OCI-LY7 (cell line): ENCODE measurements at regions of chr1 and their contacts with region 1.

Region 1: GRCh38 chr1:96741335-96741734 is 19.8 kb downstream of the PTBP2 start:
- DNase-seq: no peak
- H3K4me3 ChIP-seq: no peak overlapping the region
- H3K27ac ChIP-seq: no peak overlapping the region
- H3K4me1 ChIP-seq: no peaks in the 10 kb centered on the region
- CTCF ChIP-seq: no peak

Region 2: DNA sequence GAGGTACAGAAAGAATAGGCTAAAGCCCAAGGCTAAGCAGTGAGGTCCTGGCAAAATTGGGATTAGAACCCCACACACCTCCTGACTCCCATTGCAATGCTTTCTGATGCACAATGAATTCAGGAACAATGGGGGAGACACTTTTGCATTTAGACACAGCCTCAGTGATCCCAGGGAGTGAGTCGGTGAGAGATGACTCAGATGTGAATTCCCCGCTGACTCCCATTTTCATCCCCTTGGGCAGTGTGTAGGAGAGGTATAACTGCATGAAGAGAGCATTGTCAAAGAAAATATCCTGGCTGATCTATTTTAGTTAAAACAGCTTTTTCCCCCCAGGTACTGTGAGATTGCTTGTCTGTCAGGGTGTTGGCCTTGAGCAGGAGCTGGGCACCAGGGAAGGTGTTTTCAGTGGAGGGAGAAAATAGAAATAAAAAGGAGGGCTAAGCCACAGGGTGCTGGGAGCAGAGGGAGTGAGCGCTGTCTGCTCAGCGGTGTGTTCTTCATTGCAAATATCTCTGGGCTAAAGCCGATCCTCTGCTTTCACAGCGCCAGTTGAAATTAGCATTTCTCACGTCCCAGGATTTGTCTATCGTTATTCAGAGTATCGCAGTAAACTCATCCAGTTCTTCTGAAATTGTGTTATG is 267.4 kb before region 1 on chr1:
- CTCF ChIA-PET with region 1: no interaction called
- POLR2A ChIA-PET with region 1: no interaction called
- intact Hi-C with region 1: no loop called
- DNase-seq: no peak
- H3K4me3 ChIP-seq: no peak overlapping the region
- H3K27ac ChIP-seq: no peak overlapping the region
- H3K4me1 ChIP-seq: no peaks in the 10 kb centered on the region
- CTCF ChIP-seq: no peak

Region 3: DNA sequence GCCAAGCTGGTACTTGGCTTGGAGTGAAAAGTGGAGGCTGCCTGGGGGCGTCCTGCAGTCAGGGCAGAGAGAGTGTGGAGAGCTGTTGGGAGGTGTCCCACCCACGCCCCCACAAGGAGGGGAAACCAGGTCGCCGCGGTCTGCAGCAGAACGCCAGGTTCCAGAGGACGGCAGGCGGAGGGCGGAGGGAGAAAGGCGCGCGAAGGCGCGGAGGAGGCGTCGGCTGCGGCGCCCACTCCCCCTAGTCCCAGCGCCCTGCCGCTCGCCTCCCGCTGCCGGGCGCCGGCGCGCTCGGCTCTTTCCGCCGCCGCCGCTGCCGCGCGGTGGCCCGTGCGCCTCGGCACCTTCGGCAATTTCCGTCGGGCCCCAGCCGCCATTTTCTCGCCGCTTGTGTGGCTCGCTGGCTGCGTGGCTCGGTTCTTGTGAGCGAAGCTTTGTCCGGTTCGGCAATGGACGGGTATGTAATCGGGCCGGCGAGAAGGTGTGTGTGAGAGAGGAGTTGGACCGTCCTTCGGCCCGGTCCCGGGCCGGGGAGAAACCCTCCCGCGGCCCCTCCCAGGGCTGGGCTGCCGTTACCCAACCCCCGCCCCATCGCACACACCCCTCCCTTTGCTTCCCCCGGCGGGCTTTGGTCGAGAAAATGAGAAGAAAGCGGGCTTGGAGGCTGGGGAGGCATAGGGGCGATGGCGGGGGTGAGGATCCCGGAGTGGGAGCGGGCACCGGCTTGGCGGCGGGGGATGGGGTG is 19.7 kb before region 1 on chr1 and contains the start of gene PTBP2:
- CTCF ChIA-PET with region 1: no interaction called
- POLR2A ChIA-PET with region 1: interaction called, 11 read pairs
- intact Hi-C with region 1: no loop called
- DNase-seq: peak; percentile 87
- H3K4me3 ChIP-seq: peak within 1 kb of the TSS; percentile 82
- H3K27ac ChIP-seq: peak within 1 kb of the TSS; percentile 63
- H3K4me1 ChIP-seq: peaks cover 19% of the 10 kb centered on the region
- CTCF ChIP-seq: no peak
- total RNA-seq, gene PTBP2: 36.1 and 36.9 TPM in 2 replicates

Region 4: DNA sequence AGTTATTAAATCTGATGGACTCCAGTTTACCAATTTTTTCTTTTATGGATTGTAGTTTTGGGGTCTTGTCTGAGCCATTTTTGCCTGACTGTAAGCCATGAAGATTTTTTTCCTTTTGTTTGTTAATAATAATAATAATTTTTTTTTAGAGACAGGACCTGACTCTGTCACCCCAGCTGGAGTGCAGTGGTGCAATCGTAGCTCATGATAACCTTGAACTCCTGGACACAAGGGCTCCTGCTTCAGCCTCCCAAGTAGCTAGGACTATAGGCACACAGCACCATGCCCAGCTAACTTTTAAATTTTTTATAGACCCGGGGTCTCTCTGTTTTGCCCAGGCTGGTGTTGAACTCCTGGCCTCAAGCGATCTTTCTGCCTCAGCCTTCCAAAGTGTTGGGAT is 13.5 kb before region 1 on chr1:
- CTCF ChIA-PET with region 1: no interaction called
- POLR2A ChIA-PET with region 1: interaction called, 11 read pairs
- intact Hi-C with region 1: no loop called
- DNase-seq: no peak
- H3K4me3 ChIP-seq: no peak overlapping the region
- H3K27ac ChIP-seq: no peak overlapping the region
- H3K4me1 ChIP-seq: peaks cover 12% of the 10 kb centered on the region
- CTCF ChIP-seq: no peak

Region 5: DNA sequence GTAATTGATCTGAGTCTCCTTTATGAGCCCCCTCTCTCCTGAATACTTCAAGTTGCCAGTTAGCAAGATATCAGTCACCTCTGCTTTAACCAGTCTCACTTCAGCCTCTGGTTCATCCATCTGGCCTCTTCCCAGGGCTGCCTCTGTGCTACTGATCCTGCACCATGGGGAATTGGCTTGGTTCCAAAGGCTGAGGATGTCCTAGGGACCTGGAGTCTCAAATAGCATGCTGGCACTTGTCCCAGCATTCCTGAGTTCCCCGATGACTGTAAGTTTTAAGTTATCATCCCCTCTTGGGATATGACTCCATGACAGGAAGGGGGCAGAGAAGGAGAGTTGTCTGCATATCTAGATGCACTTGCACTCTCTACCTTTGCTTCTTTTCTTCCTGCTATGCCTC is 232.3 kb after region 1 on chr1:
- CTCF ChIA-PET with region 1: no interaction called
- POLR2A ChIA-PET with region 1: no interaction called
- intact Hi-C with region 1: no loop called
- DNase-seq: no peak
- H3K4me3 ChIP-seq: no peak overlapping the region
- H3K27ac ChIP-seq: no peak overlapping the region
- H3K4me1 ChIP-seq: no peaks in the 10 kb centered on the region
- CTCF ChIP-seq: no peak